ENCODE measurements at regions of chr20 and their contacts with region 1.

Region 1: GRCh38 chr20:34876162-34877001 is at the start of gene ACSS2:
- DNase-seq: peak; percentile 83
- ATAC-seq: peak; percentile 83
- H3K4me3 ChIP-seq: peak within 1 kb of the TSS; percentile 91
- H3K27ac ChIP-seq: no peak within 1 kb of the TSS
- H3K4me1 ChIP-seq: peaks cover 17% of the 10 kb centered on the region
- H3K27me3 ChIP-seq: no peaks in the 10 kb centered on the region; a peak in 1 of 4 replicates
- CTCF ChIP-seq: no peak
- EP300 ChIP-seq: no peak
- POLR2A ChIP-seq: peak; percentile 61
- RAD21 ChIP-seq: no peak
- polyA plus RNA-seq, gene ACSS2: 11.1 to 15.9 TPM

Region 2: DNA sequence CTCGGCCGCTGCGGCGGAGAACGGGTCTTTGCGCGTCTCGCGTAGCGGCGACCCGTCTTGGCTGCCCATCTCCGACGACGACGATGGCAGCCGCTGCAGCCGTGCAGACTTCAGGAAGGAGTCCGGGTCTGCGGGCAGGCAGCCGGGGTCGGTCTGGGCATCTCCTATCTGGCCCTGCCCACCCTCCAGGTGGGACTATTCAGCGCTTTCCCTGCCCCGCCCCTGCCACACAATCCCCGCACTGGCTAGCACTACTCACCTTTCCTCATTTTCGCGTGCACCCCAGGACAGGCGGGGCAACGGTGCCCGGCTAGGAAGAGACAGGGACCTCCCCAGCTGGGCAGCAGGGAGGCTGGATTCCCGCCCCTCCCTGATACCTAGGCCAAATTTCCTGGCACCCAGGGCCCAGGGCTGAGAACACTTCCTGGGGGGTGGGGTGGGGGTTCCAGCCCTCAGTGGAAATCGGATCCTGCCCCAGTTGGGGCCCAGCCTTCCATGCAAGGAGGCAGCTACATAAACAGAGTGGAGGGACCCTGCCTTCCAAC is 12.9 kb before region 1 on chr20:
- CTCF ChIA-PET with region 1: interaction called, 18 read pairs
- POLR2A ChIA-PET with region 1: interaction called, 9 read pairs
- RAD21 ChIA-PET with region 1: no interaction called
- SMC1A ChIA-PET with region 1: no interaction called
- in situ Hi-C with region 1: no loop called
- intact Hi-C with region 1: no loop called
- DNase-seq: no peak
- ATAC-seq: no peak
- H3K4me3 ChIP-seq: no peak overlapping the region
- H3K27ac ChIP-seq: no peak overlapping the region
- H3K4me1 ChIP-seq: no peaks in the 10 kb centered on the region
- H3K27me3 ChIP-seq: no peaks in the 10 kb centered on the region
- CTCF ChIP-seq: no peak
- EP300 ChIP-seq: no peak
- POLR2A ChIP-seq: no peak
- RAD21 ChIP-seq: no peak

Region 3: GRCh38 chr20:34904202-34904621 is 27.8 kb after region 1 on chr20:
- CTCF ChIA-PET with region 1: interaction called, 11 read pairs
- POLR2A ChIA-PET with region 1: interaction called, 13 read pairs
- RAD21 ChIA-PET with region 1: interaction called, 3 read pairs
- SMC1A ChIA-PET with region 1: interaction called, 6 read pairs
- in situ Hi-C with region 1: no loop called
- intact Hi-C with region 1: no loop called
- DNase-seq: no peak
- ATAC-seq: peak; percentile 80
- H3K4me3 ChIP-seq: no peak overlapping the region
- H3K27ac ChIP-seq: no peak overlapping the region
- H3K4me1 ChIP-seq: no peaks in the 10 kb centered on the region
- H3K27me3 ChIP-seq: no peaks in the 10 kb centered on the region
- CTCF ChIP-seq: no peak
- EP300 ChIP-seq: no peak
- POLR2A ChIP-seq: no peak
- RAD21 ChIP-seq: no peak

Region 4: DNA sequence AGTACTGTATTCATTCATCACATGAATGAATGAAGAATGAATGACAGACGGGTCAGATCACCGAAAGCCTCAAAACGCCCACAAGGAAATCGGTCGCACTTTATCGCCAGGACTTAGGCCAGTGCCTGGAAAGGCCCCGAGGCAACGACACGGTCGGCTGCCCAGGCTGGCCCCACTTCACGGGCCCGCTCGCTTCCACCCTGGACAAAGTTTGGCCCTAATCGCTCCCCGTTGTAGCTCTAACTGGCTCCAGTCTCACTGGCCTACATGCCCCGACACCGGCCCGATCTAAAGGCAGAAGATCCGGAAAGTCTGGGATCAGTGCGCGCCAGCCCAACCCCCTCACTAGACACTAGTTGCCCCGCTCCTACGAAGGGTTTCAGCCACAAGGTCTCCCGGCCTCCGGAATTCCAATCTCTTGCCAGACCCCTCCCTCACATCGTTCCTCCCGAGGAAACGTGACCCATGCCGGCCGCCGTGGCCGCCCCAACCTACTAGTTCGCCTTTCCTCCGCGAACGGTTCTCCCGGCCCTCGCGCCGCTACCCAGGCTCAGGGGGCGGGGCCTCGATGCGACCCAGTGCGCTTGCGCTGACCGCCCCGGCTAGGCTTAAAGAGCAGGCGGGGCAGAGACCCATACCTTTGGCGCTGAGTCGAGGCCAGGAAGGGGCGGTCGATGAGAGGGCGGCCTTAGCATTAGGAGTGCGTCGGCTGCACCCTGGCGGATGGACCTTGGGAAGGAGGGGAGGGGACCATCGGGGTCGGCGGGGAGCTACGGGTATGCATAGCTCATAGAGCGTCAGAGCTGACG is 79.1 kb after region 1 on chr20 and contains the starts of genes GSS and MYH7B:
- CTCF ChIA-PET with region 1: interaction called, 99 read pairs
- POLR2A ChIA-PET with region 1: interaction called, 8 read pairs
- RAD21 ChIA-PET with region 1: interaction called, 71 read pairs
- SMC1A ChIA-PET with region 1: interaction called, 16 read pairs
- in situ Hi-C with region 1: loop called (anchors 5 kb)
- intact Hi-C with region 1: loop called (anchors 1 kb)
- DNase-seq: peak; percentile 72
- ATAC-seq: peak; percentile 95
- H3K4me3 ChIP-seq: peak within 1 kb of the TSS; percentile 86
- H3K27ac ChIP-seq: peak within 1 kb of the TSS; percentile 74
- H3K4me1 ChIP-seq: peaks cover 8% of the 10 kb centered on the region
- H3K27me3 ChIP-seq: no peaks in the 10 kb centered on the region
- CTCF ChIP-seq: peak; percentile 18 to 44 (median 42); a peak in 5 of 6 replicates
- EP300 ChIP-seq: no peak
- POLR2A ChIP-seq: peak; percentile 97
- RAD21 ChIP-seq: peak; percentile 62
- polyA plus RNA-seq, gene GSS: 12.7 to 39.5 TPM
- polyA plus RNA-seq, gene MYH7B: not detected

Region 5: DNA sequence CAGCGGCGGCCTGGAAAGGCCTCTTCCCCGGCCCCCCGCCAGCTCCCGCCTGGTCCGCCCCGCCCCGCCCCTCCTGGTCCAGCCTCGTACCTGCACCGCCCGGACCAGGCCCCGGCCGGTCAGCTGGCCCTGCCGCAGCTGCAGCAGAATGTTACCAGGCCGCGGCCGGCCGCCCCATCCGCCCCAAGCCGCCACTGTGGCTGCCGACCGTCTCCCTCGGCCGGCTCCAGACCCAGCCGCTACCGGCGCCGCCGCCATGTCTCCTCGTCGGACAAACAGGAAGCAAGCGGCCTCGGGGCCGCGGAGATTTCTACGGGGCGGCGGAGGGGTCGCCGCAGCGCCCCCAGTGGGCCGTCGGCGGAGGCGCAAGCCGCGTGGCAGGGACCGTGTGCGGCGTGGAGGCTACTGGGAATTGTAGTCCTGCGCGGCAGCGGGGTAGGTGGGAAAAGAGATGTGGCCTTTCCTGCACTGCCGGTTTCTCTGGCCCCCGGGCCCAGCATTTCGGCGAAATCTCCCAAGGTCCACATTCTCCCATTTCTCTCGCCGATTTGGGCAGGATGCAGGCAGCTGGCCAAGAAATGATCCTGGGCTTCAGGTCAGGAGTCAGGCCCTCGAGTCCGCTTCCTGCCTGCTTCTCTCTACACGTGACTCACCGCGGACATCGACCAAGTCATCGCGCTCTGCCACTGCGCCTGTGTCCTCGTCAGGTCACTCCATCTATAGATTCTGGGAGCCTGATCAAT is 216.3 kb after region 1 on chr20 and contains the start of gene TRPC4AP:
- CTCF ChIA-PET with region 1: interaction called, 23 read pairs
- POLR2A ChIA-PET with region 1: no interaction called
- RAD21 ChIA-PET with region 1: interaction called, 4 read pairs
- SMC1A ChIA-PET with region 1: interaction called, 12 read pairs
- in situ Hi-C with region 1: no loop called
- intact Hi-C with region 1: loop called (anchors 10 kb)
- DNase-seq: peak; percentile 57
- ATAC-seq: peak; percentile 95
- H3K4me3 ChIP-seq: peak within 1 kb of the TSS; percentile 82
- H3K27ac ChIP-seq: peak within 1 kb of the TSS; percentile 69
- H3K4me1 ChIP-seq: peaks cover 15% of the 10 kb centered on the region
- H3K27me3 ChIP-seq: no peaks in the 10 kb centered on the region
- CTCF ChIP-seq: peak; percentile 90 to 99 (median 98); a peak in 5 of 6 replicates
- EP300 ChIP-seq: peak in 1 of 2 experiments; percentile 26; a peak in 1 of 4 replicates
- POLR2A ChIP-seq: peak; percentile 96
- RAD21 ChIP-seq: peak; percentile 64
- polyA plus RNA-seq, gene TRPC4AP: 1.1 to 2.2 TPM

Region 6: GRCh38 chr20:35207950-35208611 is 331.7 kb after region 1 on chr20:
- CTCF ChIA-PET with region 1: interaction called, 4 read pairs
- POLR2A ChIA-PET with region 1: no interaction called
- RAD21 ChIA-PET with region 1: interaction called, 3 read pairs
- SMC1A ChIA-PET with region 1: interaction called, 3 read pairs
- in situ Hi-C with region 1: no loop called
- intact Hi-C with region 1: loop called (anchors 1 kb)
- DNase-seq: peak; percentile 20
- ATAC-seq: peak; percentile 97
- H3K4me3 ChIP-seq: no peak overlapping the region
- H3K27ac ChIP-seq: no peak overlapping the region
- H3K4me1 ChIP-seq: no peaks in the 10 kb centered on the region
- H3K27me3 ChIP-seq: no peaks in the 10 kb centered on the region
- CTCF ChIP-seq: peak; percentile 66 to 89 (median 71)
- EP300 ChIP-seq: no peak
- POLR2A ChIP-seq: no peak
- RAD21 ChIP-seq: peak; percentile 94